H1 (cell line): ENCODE measurements at regions of chr19 and their contacts with region 1.

Region 1: GRCh38 chr19:40576585-40577451 is at the start of gene SHKBP1:
- DNase-seq: peak; percentile 80 to 97
- H3K4me3 ChIP-seq: peak within 1 kb of the TSS; percentile 67 to 96 (median 80)
- H3K27ac ChIP-seq: peak within 1 kb of the TSS; percentile 69
- H3K4me1 ChIP-seq: peaks cover 2 to 8% (median 5%) of the 10 kb centered on the region in 4 experiments; a peak in 6 of 7 replicates
- H3K27me3 ChIP-seq: no peaks in the 10 kb centered on the region
- CTCF ChIP-seq: no peak
- EP300 ChIP-seq: no peak
- POLR2A ChIP-seq: no peak; a peak in 1 of 3 replicates
- RAD21 ChIP-seq: no peak
- total RNA-seq, gene SHKBP1: 72.8 and 74.6 TPM in 2 replicates

Region 2: GRCh38 chr19:40592170-40592569 is 15.4 kb after region 1 on chr19:
- CTCF ChIA-PET with region 1: interaction called, 6 read pairs
- POLR2A ChIA-PET with region 1: interaction called, 20 read pairs
- DNase-seq: no peak
- H3K4me3 ChIP-seq: no peak overlapping the region
- H3K27ac ChIP-seq: no peak overlapping the region
- H3K4me1 ChIP-seq: peaks cover 0 to 7% (median 3%) of the 10 kb centered on the region in 4 experiments; a peak in 5 of 7 replicates
- H3K27me3 ChIP-seq: peaks cover 5 to 10% (median 9%) of the 10 kb centered on the region in 4 experiments
- CTCF ChIP-seq: no peak
- EP300 ChIP-seq: no peak
- POLR2A ChIP-seq: no peak
- RAD21 ChIP-seq: no peak